ENCODE measurements at regions of chr6 and their contacts with region 1.

Region 1: DNA sequence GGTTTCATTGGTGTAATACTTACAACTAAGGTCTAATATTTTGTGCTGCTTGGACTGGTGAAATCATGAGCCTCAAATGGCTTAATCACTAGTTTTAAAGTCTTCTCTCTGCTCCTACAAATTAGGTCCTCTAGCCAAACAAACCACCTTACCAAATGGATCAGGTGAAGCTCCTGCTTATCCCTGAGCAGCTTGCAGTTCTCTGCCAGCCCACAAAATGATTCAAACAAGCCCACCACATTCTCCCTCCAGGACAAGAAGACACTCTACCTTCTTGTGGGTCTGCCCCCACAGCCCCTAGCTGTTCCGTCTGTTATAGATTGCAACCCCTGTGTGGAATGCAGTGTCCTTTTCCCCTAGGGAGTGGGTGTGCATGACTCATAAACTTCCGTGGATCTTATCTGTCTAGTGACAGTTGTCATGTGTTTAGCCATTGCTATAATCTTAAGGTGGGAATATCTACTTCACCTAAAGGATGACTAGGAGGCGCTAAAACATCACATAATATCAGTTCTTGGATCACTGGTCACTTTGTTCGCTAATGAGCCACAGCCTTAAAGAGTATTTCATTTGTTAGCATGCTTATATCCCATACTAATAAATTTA is 940.5 kb upstream of the MANEA start:
- DNase-seq: peak; percentile 6 to 36
- H3K4me3 ChIP-seq: no peak overlapping the region
- H3K27ac ChIP-seq: no peak overlapping the region
- H3K4me1 ChIP-seq: no peaks in the 10 kb centered on the region
- H3K27me3 ChIP-seq: no peaks in the 10 kb centered on the region
- CTCF ChIP-seq: peak; percentile 59; the same call in 1 of the 2 replicates

Region 2: DNA sequence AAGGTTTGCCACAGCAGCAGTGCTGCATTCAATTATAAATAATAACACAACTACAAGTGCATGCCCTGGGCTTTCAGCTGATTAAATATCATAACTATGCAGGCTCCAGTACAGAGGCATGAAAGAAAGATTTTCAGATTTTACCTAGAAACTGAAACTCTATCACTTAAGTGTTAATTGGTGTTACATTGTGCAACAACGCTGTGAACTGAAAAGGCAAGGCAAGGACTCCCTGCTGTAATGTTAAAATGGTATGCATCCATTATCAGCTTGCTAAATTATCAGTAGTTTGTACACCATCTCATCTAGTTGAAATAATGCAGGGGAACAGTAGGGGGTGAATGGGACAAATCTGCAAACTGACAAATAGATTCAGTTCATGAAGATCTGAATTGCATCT is 36.2 kb before region 1 on chr6:
- CTCF ChIA-PET with region 1: no interaction called
- POLR2A ChIA-PET with region 1: no interaction called
- intact Hi-C with region 1: no loop called
- DNase-seq: no peak
- H3K4me3 ChIP-seq: no peak overlapping the region
- H3K27ac ChIP-seq: no peak overlapping the region
- H3K4me1 ChIP-seq: no peaks in the 10 kb centered on the region
- H3K27me3 ChIP-seq: no peaks in the 10 kb centered on the region
- CTCF ChIP-seq: no peak

Region 3: GRCh38 chr6:94680669-94681212 is 43.9 kb after region 1 on chr6:
- CTCF ChIA-PET with region 1: no interaction called
- POLR2A ChIA-PET with region 1: no interaction called
- intact Hi-C with region 1: no loop called
- DNase-seq: no peak
- H3K4me3 ChIP-seq: no peak overlapping the region
- H3K27ac ChIP-seq: no peak overlapping the region
- H3K4me1 ChIP-seq: no peaks in the 10 kb centered on the region
- H3K27me3 ChIP-seq: no peaks in the 10 kb centered on the region
- CTCF ChIP-seq: no peak

Region 4: DNA sequence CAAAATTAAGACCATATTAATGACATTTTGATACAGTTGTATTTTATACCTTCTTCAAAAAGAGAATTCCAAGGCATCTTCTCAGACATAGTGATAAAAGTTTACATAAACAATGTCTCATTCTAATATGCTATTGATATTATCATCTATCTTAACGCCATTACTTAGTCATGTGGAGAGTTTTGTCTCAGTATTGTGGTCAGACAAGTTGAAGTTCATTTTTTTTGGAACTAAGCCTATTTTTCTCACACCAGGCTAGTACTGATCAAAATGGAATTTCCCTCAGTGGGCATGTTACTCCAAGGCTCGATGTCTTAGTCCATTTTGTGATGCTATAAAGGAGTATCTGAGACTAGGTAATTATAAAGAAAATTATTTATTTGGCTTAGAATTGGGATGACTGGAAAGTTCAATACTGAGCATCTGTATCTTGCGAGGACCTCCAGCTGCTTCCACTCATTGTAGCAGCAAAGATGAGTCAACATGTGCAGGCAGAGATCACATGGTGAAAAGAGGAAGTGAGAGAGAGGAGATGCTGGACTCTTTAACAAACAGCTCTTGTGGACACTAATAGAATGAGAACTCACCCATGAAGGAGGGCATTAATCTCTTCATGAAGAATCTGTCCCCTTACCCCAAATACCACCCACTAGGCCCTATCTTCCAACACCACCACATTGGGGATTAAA is 114.9 kb after region 1 on chr6:
- CTCF ChIA-PET with region 1: no interaction called
- POLR2A ChIA-PET with region 1: no interaction called
- intact Hi-C with region 1: no loop called
- DNase-seq: no peak
- H3K4me3 ChIP-seq: no peak overlapping the region
- H3K27ac ChIP-seq: no peak overlapping the region
- H3K4me1 ChIP-seq: no peaks in the 10 kb centered on the region
- H3K27me3 ChIP-seq: no peaks in the 10 kb centered on the region
- CTCF ChIP-seq: no peak

Region 5: GRCh38 chr6:95133578-95133977 is 496.7 kb after region 1 on chr6:
- CTCF ChIA-PET with region 1: interaction called, 3 read pairs
- POLR2A ChIA-PET with region 1: no interaction called
- intact Hi-C with region 1: loop called (anchors 5 kb)
- DNase-seq: no peak
- H3K4me3 ChIP-seq: no peak overlapping the region
- H3K27ac ChIP-seq: no peak overlapping the region
- H3K4me1 ChIP-seq: no peaks in the 10 kb centered on the region
- H3K27me3 ChIP-seq: no peaks in the 10 kb centered on the region
- CTCF ChIP-seq: peak; percentile 45; the same call in 1 of the 2 replicates

Region 6: DNA sequence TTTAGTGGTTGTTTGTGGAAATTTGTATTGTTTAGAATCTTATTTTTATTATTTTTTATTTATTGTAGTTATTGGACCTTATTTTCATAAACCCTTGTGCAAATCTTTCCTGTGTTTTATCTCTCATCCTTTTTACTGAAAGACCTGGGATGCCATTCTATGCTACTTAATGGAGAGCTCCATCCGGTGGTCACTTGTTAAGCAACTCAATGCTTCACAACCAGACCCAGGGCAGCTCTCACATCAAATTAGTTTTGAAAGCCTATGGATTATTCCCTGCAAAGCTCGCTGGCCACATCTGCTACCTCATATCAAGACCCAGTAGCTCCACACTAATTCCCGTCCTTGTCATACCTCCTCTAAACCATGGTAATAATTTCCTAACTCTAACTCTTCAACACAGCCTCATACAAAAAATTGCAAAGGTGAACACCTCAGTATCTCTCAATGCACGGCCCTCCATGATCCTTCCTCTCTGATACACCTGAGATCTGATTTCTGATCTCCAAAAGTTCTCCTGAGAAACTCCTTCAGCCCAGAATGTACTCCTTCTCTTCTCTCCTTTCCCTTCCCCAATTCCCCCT is 643.9 kb after region 1 on chr6:
- CTCF ChIA-PET with region 1: no interaction called
- POLR2A ChIA-PET with region 1: no interaction called
- intact Hi-C with region 1: loop called (anchors 5 kb)
- DNase-seq: peak in 1 of 2 experiments; percentile 37
- H3K4me3 ChIP-seq: no peak overlapping the region
- H3K27ac ChIP-seq: no peak overlapping the region
- H3K4me1 ChIP-seq: no peaks in the 10 kb centered on the region
- H3K27me3 ChIP-seq: no peaks in the 10 kb centered on the region
- CTCF ChIP-seq: peak; percentile 75

Measured in PC-9 (cell line).